ENCODE measurements at regions of chr1 and their contacts with region 1.

Region 1: GRCh38 chr1:159798893-159799292 is 3.3 kb upstream of the FCRL6 start:
- DNase-seq: peak; percentile 61 to 72
- ATAC-seq: peak; percentile 94

Region 2: DNA sequence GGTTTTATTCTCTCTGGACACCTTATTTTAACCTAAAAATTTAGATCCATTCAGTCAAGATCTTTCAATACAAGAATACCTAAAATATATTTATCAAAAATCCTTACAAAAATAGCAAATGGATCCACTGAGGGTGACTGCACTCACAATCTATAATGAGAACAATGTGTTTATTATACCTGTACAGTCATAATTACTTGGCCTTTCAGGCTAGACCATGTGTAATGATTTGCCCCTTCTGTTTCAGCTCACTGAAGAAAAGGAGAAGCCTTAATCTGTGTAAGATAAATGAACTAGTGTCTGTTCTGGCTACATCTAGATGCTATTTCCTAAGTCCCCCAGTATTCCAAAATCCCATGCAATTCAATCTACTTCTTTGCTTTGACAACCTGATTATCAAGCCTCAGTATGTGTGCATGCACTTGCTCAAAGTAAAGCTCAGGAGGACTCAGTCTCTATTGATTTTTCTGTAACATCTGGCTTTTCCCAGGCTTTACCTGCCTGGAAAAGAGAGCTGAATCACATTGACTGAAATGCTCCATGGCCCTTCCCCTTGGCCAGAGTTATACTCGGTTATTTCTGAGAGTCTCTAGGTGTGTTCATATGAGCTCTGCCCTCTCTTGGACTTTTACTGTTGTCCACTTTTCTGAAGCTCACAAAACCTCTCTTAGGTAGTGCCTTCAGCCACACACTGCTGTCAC is 112.1 kb before region 1 on chr1:
- intact Hi-C with region 1: no loop called
- DNase-seq: no peak
- ATAC-seq: no peak

Region 3: GRCh38 chr1:159891275-159892157 is 92.6 kb after region 1 on chr1:
- intact Hi-C with region 1: loop called (anchors 2 to 5 kb)
- DNase-seq: peak; percentile 80 to 89
- ATAC-seq: peak; percentile 99

Region 4: GRCh38 chr1:160006312-160006940 is 207.5 kb after region 1 on chr1:
- intact Hi-C with region 1: loop called in 1 of 2 experiments (anchors 5 kb)
- DNase-seq: peak; percentile 62 to 87
- ATAC-seq: peak; percentile 86

Measured in left colon (tissue), 2 donors.